ENCODE measurements at regions of chr14 and their contacts with region 1.

Region 1: DNA sequence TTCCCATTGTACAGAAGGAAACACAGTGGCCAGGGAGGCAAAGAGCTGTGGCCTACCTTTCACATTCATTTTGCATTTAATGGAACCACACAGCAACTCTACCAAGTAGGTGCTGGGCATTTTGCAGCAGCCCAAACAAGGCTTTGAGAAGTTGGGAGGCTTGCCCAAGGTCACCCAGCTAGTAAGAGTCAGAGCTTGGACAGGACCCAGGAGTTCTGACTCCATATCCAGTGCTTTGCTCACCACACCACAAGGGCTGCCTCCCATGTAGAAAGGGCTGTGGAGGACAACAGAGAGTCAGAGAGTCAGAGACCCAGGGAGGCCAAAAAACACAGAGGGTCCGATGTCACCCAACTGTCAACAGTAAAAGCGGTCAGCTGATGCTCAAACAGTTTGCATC is 400.2 kb downstream of the BCL11B start:
- DNase-seq: no peak
- H3K4me3 ChIP-seq: no peak overlapping the region
- H3K27ac ChIP-seq: no peak overlapping the region
- H3K4me1 ChIP-seq: no peaks in the 10 kb centered on the region
- CTCF ChIP-seq: no peak

Region 2: DNA sequence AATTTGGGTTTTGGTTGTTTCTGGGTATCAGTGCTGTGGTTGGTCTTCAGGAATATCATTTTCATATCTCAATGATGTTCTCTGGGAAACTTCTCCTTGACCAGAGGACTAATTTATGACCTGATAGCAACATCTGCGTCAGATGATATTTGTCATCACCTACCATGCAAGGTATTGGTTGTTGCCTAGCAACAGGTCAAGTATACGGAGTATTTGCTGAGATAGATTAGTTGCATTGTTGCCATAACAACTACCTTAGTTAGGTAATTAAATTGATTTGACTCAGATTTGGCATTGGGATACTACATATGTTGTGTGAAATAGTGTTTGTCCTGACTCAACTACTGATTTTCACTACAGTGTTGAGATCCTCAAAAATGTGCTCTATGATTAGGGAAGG is 316.9 kb before region 1 on chr14:
- CTCF ChIA-PET with region 1: no interaction called
- POLR2A ChIA-PET with region 1: no interaction called
- intact Hi-C with region 1: loop called (anchors 5 kb)
- DNase-seq: no peak
- H3K4me3 ChIP-seq: no peak overlapping the region
- H3K27ac ChIP-seq: no peak overlapping the region
- H3K4me1 ChIP-seq: no peaks in the 10 kb centered on the region
- CTCF ChIP-seq: no peak

Region 3: DNA sequence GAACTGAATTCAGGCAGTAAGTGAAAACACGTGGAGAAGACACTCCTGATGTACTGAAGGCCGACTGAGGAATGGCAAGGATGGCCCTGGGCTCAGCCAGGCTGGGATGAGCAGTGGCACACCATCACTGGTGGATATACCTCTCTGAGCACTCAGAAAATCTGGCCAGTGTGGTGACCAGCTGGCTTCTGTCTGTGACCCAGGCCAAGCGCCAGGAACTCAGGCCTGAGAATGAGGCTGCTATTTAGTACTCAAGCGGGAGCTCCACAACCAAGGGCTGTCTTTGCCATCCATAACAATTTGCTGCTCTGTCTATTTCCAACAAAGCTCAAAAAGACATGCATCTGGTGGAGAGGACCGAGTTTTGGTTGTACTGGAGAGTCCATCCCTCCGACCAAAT is 186.1 kb before region 1 on chr14:
- CTCF ChIA-PET with region 1: no interaction called
- POLR2A ChIA-PET with region 1: no interaction called
- intact Hi-C with region 1: no loop called
- DNase-seq: no peak
- H3K4me3 ChIP-seq: no peak overlapping the region
- H3K27ac ChIP-seq: no peak overlapping the region
- H3K4me1 ChIP-seq: no peaks in the 10 kb centered on the region
- CTCF ChIP-seq: no peak

Measured in OCI-LY7 (cell line).